ENCODE measurements at regions of chr21 and their contacts with region 1.

Region 1: DNA sequence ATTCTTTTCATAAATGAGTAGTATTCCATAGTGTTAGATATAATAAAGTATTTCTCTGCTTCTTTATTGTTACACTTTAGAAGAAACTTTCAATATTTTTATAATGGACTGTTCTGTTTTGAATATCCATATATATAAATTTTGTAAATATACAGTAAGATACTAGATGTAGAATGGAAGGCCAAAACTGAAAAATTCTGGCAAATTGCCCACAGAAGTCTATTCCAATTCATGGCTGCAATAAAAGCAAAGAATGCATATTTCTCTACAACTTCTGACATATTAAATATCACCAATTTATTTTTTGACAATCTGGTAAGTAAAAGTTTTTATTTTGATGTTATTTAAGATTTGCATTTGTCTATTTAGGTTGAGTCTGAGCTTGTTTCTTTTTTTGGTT is 532.5 kb downstream of the NCAM2 start:
- DNase-seq: no peak
- H3K4me3 Mint-ChIP-seq: no peak overlapping the region
- H3K27ac Mint-ChIP-seq: no peak overlapping the region
- H3K4me1 Mint-ChIP-seq: no peaks in the 10 kb centered on the region
- H3K27me3 Mint-ChIP-seq: no peaks in the 10 kb centered on the region

Region 2: DNA sequence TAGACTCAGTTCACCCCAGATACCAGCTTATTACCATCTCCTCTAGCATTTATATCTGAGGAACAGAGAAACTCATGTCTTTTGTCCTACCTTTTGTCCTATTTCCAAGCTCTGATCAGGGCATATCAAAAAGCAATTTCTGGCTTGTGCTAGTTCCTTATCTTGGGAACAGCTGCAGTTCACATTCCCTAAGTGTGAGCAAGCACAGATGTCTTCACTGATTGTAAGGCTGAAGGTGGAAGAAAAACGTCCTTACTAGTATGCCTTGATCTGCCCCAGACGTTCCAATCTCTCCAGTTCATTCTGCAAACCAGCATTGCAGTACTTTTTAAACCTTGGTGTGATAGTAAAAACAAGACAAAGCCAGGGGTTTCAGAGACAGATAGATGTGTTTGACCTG is 392.7 kb before region 1 on chr21:
- intact Hi-C with region 1: loop called (anchors 10 kb)
- DNase-seq: no peak
- H3K4me3 Mint-ChIP-seq: no peak overlapping the region
- H3K27ac Mint-ChIP-seq: no peak overlapping the region
- H3K4me1 Mint-ChIP-seq: no peaks in the 10 kb centered on the region
- H3K27me3 Mint-ChIP-seq: no peaks in the 10 kb centered on the region

Measured in activated CD4-positive, alpha-beta T cell treated with anti-CD3 and anti-CD28 coated beads, Interleukin-2, amount 10 ng/mL, durations not matched to agents 24 days and 14 days (primary cell).